MCF 10A (cell line): ENCODE measurements at regions of chr21 and their contacts with region 1.

Region 1: DNA sequence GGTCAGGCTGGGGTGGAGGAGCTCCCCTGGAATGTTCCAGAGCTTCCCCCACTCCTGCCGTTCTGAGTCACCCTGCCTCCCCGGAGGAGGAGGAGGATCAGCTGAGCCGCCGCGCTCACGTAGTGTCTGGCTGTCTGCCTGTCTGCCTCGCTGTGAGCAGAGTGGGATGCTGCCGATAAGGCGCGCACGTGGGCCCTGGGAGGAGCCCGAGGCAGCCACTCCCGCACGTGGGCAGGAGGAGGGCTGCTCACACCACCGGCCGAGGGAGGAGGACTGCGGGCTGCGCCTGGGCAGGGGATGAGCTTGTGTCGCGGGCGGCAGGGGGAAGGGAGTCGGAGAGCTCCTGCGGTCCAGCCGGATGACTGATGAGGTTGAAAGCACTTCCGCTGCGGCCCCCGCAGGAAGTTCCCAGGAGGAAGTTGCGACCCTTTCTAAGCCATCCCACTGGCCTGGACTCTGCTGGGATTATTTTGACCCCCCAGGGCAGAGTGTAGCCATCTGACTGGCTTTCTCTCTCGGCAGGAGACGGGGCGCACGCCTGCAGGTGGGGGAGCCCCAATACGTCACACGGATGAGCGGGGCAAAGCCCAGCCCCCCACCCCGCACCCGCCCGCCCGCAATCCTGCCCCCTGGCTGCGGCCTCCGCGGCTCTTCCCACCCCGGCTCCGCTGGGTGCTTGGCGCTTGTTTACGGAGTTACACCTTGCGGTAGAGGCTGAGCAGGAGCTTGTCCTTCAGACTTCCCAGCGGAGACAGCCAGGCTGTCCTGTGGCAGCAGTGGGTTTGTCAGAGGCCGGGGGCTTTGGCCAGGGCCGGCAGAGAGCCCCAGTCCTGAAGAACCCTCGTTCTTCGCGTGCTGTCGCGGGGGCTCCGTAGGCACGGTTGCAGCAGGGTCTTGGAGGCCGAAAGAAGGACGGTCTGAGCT is 9.8 kb downstream of the PDXK start:
- DNase-seq: peak; percentile 94
- H3K4me3 Mint-ChIP-seq: peak overlapping the region; percentile 69
- H3K27ac Mint-ChIP-seq: peak overlapping the region; percentile 86
- H3K4me1 Mint-ChIP-seq: peaks cover 58% of the 10 kb centered on the region
- H3K27me3 Mint-ChIP-seq: no peaks in the 10 kb centered on the region
- CTCF ChIP-seq: no peak

Region 2: DNA sequence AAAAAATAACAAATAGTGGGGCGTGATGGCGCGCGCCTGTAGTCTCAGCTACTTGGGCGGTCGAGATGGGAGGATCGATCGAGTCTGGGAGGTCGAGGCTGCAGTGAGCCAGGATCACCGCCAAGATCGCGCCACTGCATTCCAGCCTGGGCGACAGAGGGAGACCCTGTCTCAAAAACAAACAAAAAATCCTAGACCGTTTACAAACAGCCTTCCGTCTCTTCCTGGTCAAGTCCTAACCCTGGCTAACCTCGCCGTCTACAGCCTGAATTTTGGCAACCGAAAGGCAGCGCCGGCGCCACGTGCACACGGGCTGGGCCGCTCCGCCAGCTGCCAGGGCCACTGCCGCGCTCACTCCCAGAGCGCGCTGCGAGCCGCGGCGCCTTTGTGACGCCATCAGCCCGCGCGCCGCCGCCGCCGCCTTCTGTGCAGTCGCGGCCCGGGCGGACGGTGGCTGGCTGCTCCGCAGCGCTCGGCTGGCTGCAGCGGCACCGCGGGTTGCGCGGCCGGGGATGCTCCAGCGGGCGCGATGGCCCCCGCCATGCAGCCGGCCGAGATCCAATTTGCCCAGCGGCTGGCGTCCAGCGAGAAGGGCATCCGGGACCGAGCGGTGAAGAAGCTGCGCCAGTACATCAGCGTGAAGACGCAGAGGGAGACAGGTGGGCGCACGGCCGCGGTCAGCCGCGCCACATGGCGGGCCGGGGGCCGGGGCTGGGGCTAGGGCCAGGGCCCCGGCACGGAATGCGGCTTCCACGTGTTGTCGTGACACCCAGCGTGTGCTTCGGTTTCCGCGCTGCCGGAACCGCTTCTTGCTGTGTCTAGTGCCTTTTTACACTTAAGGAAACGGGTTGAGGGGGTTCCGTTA is 69.4 kb before region 1 on chr21 and contains the starts of genes HSF2BP and RRP1B:
- CTCF ChIA-PET with region 1: interaction called, 3 read pairs
- POLR2A ChIA-PET with region 1: interaction called, 19 read pairs
- intact Hi-C with region 1: loop called (anchors 2 kb)
- DNase-seq: peak; percentile 77
- H3K4me3 Mint-ChIP-seq: peak within 1 kb of the TSS; percentile 97
- H3K27ac Mint-ChIP-seq: peak within 1 kb of the TSS; percentile 90
- H3K4me1 Mint-ChIP-seq: peaks cover 21% of the 10 kb centered on the region
- H3K27me3 Mint-ChIP-seq: no peaks in the 10 kb centered on the region
- CTCF ChIP-seq: no peak
- total RNA-seq, gene HSF2BP: 5.3 and 6.8 TPM in 2 replicates
- total RNA-seq, gene RRP1B: 35.3 and 39.8 TPM in 2 replicates

Region 3: GRCh38 chr21:43712308-43712974 is 16.3 kb before region 1 on chr21:
- CTCF ChIA-PET with region 1: interaction called, 5 read pairs
- POLR2A ChIA-PET with region 1: interaction called, 37 read pairs
- intact Hi-C with region 1: loop called (anchors 2 kb)
- DNase-seq: peak; percentile 79
- H3K4me3 Mint-ChIP-seq: peak overlapping the region; percentile 46
- H3K27ac Mint-ChIP-seq: peak overlapping the region; percentile 96
- H3K4me1 Mint-ChIP-seq: peaks cover 28% of the 10 kb centered on the region
- H3K27me3 Mint-ChIP-seq: no peaks in the 10 kb centered on the region
- CTCF ChIP-seq: no peak

Region 4: GRCh38 chr21:43739621-43740435 is 11.1 kb after region 1 on chr21:
- CTCF ChIA-PET with region 1: no interaction called
- POLR2A ChIA-PET with region 1: no interaction called
- intact Hi-C with region 1: no loop called
- DNase-seq: no peak
- H3K4me3 Mint-ChIP-seq: no peak overlapping the region
- H3K27ac Mint-ChIP-seq: no peak overlapping the region
- H3K4me1 Mint-ChIP-seq: peaks cover 5% of the 10 kb centered on the region
- H3K27me3 Mint-ChIP-seq: no peaks in the 10 kb centered on the region
- CTCF ChIP-seq: no peak

Region 5: GRCh38 chr21:43758111-43758641 is 29.4 kb after region 1 on chr21:
- CTCF ChIA-PET with region 1: interaction called, 4 read pairs
- POLR2A ChIA-PET with region 1: interaction called, 10 read pairs
- intact Hi-C with region 1: no loop called
- DNase-seq: peak; percentile 94
- H3K4me3 Mint-ChIP-seq: peak overlapping the region; percentile 44
- H3K27ac Mint-ChIP-seq: peak overlapping the region; percentile 90
- H3K4me1 Mint-ChIP-seq: peaks cover 11% of the 10 kb centered on the region
- H3K27me3 Mint-ChIP-seq: no peaks in the 10 kb centered on the region
- CTCF ChIP-seq: no peak

Region 6: DNA sequence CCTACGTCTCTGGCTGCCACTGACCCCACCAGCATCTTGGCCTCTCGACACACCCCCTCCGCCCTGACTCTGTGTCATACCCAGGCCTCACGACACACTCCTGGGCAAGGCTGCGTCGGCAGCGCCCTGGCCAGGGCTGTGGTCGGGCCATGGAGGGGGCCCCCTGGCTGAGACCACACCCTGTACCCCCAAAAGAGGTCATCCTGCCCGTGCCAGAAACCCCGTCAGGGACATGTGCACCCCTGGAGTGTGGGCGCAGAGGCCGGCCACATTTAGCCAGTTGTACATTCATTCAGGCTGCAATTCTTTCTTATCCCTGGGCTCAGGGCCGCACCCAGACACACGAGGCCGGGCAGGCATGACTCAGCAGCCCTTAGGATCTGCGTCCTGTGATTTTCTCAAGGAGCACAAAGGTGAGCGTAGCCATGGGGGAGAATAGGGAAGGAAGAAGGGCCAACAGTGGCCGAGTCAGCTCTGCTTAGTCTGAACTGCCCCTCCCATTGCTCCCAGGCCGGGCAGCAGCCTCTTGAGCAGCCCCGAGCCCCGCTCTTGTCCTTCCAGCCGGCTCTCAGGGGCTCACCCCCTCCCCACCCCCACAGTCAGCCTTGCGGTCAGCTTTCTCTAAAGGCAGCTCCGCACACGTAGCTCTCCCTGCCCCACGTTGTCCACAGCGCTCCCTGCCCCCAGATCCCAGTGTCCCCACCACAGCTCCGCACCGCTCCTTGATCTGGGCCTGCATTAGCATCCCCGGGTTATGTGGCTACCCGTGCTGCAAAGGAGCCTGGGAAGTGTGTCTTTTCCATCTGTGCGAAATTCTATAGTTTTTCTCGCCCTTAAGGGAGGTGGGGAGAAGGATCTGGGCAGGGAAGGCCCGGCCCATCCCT is 39.5 kb after region 1 on chr21:
- CTCF ChIA-PET with region 1: no interaction called
- POLR2A ChIA-PET with region 1: interaction called, 13 read pairs
- intact Hi-C with region 1: no loop called
- DNase-seq: peak; percentile 94
- H3K4me3 Mint-ChIP-seq: peak overlapping the region; percentile 45
- H3K27ac Mint-ChIP-seq: peak overlapping the region; percentile 99
- H3K4me1 Mint-ChIP-seq: peaks cover 34% of the 10 kb centered on the region
- H3K27me3 Mint-ChIP-seq: no peaks in the 10 kb centered on the region
- CTCF ChIP-seq: no peak

Region 7: DNA sequence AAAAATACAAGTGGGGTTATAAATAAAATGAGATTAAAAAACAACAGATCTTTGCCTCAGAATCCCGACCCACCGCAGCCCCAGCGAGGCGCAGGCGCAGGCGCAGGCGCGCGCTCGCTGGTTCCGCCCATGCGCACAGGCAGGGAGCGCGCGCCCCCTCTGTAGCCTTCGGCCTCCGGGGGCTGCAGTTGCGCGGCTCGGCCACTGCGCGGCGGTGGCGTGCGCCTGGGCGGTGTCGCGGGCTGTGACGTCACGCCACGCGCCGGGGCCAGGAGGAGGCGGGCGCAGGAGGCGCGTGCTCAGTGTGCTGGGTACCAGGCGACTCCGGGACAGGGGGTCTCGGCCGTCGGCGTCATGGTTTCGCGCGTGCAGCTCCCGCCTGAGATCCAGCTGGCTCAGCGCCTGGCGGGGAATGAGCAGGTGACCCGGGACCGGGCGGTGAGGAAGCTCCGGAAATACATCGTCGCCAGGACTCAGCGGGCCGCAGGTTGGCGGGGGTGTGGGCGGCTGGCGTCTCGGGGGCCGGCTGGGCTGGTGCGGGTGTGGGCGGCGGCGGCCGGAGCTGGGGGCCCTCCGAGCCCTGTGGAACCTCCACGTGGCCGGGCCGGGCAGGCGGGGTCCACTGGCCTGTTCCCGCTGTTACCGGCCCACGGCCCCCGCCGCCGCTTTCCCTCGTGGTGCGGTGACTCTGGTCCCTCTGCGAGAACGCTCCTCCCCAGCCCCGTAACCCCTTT is 60.7 kb after region 1 on chr21 and contains the start of gene RRP1:
- CTCF ChIA-PET with region 1: interaction called, 3 read pairs
- POLR2A ChIA-PET with region 1: interaction called, 11 read pairs
- intact Hi-C with region 1: no loop called
- DNase-seq: peak; percentile 85
- H3K4me3 Mint-ChIP-seq: peak within 1 kb of the TSS; percentile 91
- H3K27ac Mint-ChIP-seq: peak within 1 kb of the TSS; percentile 84
- H3K4me1 Mint-ChIP-seq: peaks cover 6% of the 10 kb centered on the region
- H3K27me3 Mint-ChIP-seq: no peaks in the 10 kb centered on the region
- CTCF ChIP-seq: peak; percentile 93
- total RNA-seq, gene RRP1: 43.7 and 56.0 TPM in 2 replicates